ENCODE measurements at regions of chr15 and their contacts with region 1.

Region 1: DNA sequence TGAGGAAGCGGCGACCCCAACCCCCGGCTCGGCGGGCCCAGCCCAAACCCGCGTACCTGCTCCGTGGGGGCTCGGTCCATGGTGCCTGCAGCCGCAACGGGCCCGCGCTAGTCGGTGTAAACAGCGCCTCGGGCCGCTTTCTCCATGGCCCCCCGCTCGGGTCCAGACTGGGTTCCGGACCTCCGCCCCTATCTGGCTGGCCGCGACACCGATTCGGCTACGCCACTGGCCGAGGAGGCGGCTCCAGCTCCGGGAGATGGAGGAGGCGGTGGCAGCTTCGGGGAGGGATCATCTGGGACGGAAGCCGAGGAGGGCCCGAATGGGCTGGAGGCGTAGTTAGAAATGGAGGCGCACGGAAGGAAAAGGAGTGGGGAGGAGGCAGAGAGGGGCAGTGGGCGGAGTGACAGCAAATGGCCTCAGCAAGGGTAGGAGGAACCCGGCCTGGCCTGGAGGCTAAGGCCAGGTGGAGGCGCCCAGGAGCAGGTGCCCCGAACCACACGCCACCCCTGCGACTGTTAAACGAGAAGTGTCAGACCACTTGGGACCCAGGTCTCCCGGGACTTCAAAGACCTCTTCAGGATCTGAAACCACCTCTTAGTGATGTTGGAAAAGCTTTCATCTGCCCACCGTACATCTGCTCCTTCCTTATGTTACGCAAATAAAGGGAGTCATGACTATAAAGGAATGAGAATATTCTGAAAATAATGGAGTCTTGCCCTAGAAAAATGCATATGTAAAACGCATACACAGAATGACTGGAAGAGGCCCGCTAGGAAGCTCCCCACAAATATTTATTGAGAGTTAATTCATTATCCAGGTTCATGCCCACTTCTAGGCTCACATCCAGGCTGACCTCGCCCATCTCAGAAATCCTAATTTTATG is at the start of gene SECISBP2L:
- DNase-seq: peak; percentile 96
- H3K4me3 Mint-ChIP-seq: peak within 1 kb of the TSS; percentile 91
- H3K27ac Mint-ChIP-seq: peak within 1 kb of the TSS; percentile 76
- H3K4me1 Mint-ChIP-seq: peaks cover 28% of the 10 kb centered on the region
- H3K27me3 Mint-ChIP-seq: no peaks in the 10 kb centered on the region
- total RNA-seq, gene SECISBP2L: 22.5 to 24.6 TPM

Region 2: DNA sequence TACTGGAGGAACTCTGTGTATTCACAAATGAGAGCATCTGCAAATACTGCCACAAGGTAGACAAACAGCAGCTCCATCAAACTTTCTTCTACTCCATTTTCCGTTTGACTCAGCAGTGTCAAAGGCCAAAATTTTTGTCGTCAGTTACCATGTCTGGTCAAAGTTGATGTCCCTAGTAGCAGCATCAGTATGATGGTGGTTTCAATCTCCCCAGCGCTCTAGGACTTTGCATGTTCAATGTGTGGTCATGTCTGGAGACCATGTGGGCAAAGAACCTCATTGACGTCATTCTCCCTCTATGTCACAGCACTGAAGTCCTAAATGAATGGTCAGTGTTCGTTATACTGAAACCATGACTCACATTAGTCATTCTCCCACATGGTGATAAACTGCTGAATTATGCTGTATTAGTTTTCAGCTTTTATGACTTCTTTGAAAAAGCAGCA is 106.0 kb before region 1 on chr15:
- CTCF ChIA-PET with region 1: no interaction called
- POLR2A ChIA-PET with region 1: no interaction called
- intact Hi-C with region 1: no loop called
- DNase-seq: peak; percentile 45
- H3K4me3 Mint-ChIP-seq: no peak overlapping the region
- H3K27ac Mint-ChIP-seq: peak overlapping the region; percentile 42
- H3K4me1 Mint-ChIP-seq: peaks cover 14% of the 10 kb centered on the region
- H3K27me3 Mint-ChIP-seq: peaks cover 22% of the 10 kb centered on the region

Region 3: GRCh38 chr15:48963524-48964113 is 82.8 kb before region 1 on chr15 and contains the start of gene SHC4:
- CTCF ChIA-PET with region 1: no interaction called
- POLR2A ChIA-PET with region 1: no interaction called
- intact Hi-C with region 1: loop called (anchors 5 kb)
- DNase-seq: no peak
- H3K4me3 Mint-ChIP-seq: peak within 1 kb of the TSS; percentile 61
- H3K27ac Mint-ChIP-seq: no peak within 1 kb of the TSS
- H3K4me1 Mint-ChIP-seq: peaks cover 32% of the 10 kb centered on the region
- H3K27me3 Mint-ChIP-seq: peaks cover 25% of the 10 kb centered on the region
- total RNA-seq, gene SHC4: 1.9 to 2.6 TPM

Region 4: GRCh38 chr15:49155110-49155833 is 108.8 kb after region 1 on chr15 and contains the start of gene COPS2:
- CTCF ChIA-PET with region 1: no interaction called
- POLR2A ChIA-PET with region 1: interaction called, 3 read pairs
- intact Hi-C with region 1: loop called (anchors 1 kb)
- DNase-seq: peak; percentile 97
- H3K4me3 Mint-ChIP-seq: peak within 1 kb of the TSS; percentile 99
- H3K27ac Mint-ChIP-seq: peak within 1 kb of the TSS; percentile 97
- H3K4me1 Mint-ChIP-seq: peaks cover 50% of the 10 kb centered on the region
- H3K27me3 Mint-ChIP-seq: no peaks in the 10 kb centered on the region
- total RNA-seq, gene COPS2: 79.8 to 80.0 TPM

Region 5: DNA sequence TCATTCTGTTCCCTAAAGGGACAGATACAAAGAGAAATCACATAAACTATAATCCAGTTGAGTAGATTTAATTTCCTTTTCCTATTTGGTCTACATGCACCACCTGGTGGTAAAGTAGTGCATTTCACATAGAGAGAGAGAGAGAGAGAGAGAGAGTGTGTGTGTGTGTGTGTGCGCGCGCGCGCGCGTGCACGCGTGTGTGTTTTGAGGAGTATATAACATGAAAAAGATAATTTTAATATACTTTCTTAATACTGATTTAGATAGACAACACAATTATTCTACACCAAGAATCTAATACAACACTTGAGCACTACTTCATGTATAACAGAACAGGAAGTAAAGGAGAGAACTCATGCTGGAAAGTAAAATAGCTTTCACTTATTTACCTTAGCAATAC is 375.5 kb after region 1 on chr15:
- CTCF ChIA-PET with region 1: interaction called, 3 read pairs
- POLR2A ChIA-PET with region 1: no interaction called
- intact Hi-C with region 1: loop called (anchors 2 kb)
- DNase-seq: peak; percentile 27
- H3K4me3 Mint-ChIP-seq: no peak overlapping the region
- H3K27ac Mint-ChIP-seq: peak overlapping the region; percentile 48
- H3K4me1 Mint-ChIP-seq: peaks cover 3% of the 10 kb centered on the region
- H3K27me3 Mint-ChIP-seq: no peaks in the 10 kb centered on the region